WTC11 (cell line): ENCODE measurements at regions of chr16 and their contacts with region 1.

Region 1: GRCh38 chr16:30585400-30586189 is at the start of gene ZNF785:
- DNase-seq: peak; percentile 96
- ATAC-seq: peak; percentile 91
- H3K4me3 Mint-ChIP-seq: peak within 1 kb of the TSS; percentile 89
- H3K27ac Mint-ChIP-seq: peak within 1 kb of the TSS; percentile 97
- H3K4me1 Mint-ChIP-seq: peaks cover 10% of the 10 kb centered on the region; the same call in 1 of the 2 replicates
- H3K27me3 Mint-ChIP-seq: no peaks in the 10 kb centered on the region
- CTCF ChIP-seq: no peak
- total RNA-seq, gene ZNF785: 15.4 to 16.5 TPM (median 16.0 TPM) in 3 replicates

Region 2: DNA sequence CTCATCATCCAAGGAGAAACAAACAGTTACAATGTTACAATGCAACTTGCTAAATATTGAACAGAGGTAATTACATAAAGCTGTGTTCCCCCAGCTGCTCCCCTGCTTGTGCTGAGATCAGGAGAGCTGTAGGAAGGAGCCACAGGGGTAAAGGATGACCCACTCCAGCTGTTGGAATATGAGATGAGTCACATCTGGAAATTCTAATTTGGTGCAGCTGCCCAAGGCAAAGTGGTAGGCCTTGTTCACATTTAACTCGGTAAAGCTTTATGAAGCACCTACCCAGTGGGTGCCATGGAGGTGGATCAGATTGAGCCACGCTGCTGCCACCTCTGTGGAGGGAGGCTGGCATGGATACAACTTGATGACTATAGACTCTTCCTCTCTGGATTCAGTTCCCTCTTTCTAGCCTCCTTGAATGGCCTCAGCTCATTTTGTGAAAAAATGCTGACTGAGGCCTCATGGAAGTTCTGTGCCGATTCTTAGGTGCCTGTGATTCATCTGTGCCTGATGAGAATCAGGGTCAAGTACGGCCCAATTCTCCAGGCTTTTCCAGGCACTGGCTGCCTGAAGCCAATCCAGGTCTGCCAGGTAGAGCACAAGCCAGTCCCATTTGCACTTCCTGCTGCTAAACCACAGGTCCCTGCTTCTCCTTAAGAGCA is 17.2 kb after region 1 on chr16:
- CTCF ChIA-PET with region 1: interaction called, 14 read pairs
- POLR2A ChIA-PET with region 1: interaction called, 4 read pairs
- DNase-seq: no peak
- ATAC-seq: no peak
- H3K4me3 Mint-ChIP-seq: no peak overlapping the region
- H3K27ac Mint-ChIP-seq: peak overlapping the region; percentile 57; the same call in 1 of the 2 replicates
- H3K4me1 Mint-ChIP-seq: no peaks in the 10 kb centered on the region
- H3K27me3 Mint-ChIP-seq: no peaks in the 10 kb centered on the region
- CTCF ChIP-seq: no peak

Region 3: DNA sequence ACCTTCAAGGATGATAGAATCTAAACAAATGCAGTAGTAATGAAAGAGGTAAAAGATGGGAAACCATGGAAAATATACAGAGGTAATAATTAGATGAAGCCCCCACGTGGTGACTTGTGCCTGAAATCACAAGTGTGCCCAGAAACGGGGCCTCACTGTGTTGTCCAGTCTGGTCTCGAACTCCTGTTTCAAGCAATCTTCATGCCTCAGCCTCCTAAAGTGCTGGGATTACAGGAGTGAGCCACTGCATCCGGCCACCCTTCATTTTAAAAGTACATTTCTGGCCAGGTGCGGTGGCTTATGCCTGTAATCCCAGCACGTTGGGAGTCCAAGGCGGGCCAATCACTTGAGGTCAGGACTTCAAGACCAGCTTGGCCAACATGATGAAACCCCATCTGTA is 51.0 kb after region 1 on chr16:
- CTCF ChIA-PET with region 1: no interaction called
- POLR2A ChIA-PET with region 1: no interaction called
- DNase-seq: no peak
- ATAC-seq: no peak
- H3K4me3 Mint-ChIP-seq: no peak overlapping the region
- H3K27ac Mint-ChIP-seq: no peak overlapping the region
- H3K4me1 Mint-ChIP-seq: peaks cover 7% of the 10 kb centered on the region
- H3K27me3 Mint-ChIP-seq: peaks cover 3% of the 10 kb centered on the region
- CTCF ChIP-seq: no peak